ENCODE measurements at regions of chr11 and their contacts with region 1.

Region 1: DNA sequence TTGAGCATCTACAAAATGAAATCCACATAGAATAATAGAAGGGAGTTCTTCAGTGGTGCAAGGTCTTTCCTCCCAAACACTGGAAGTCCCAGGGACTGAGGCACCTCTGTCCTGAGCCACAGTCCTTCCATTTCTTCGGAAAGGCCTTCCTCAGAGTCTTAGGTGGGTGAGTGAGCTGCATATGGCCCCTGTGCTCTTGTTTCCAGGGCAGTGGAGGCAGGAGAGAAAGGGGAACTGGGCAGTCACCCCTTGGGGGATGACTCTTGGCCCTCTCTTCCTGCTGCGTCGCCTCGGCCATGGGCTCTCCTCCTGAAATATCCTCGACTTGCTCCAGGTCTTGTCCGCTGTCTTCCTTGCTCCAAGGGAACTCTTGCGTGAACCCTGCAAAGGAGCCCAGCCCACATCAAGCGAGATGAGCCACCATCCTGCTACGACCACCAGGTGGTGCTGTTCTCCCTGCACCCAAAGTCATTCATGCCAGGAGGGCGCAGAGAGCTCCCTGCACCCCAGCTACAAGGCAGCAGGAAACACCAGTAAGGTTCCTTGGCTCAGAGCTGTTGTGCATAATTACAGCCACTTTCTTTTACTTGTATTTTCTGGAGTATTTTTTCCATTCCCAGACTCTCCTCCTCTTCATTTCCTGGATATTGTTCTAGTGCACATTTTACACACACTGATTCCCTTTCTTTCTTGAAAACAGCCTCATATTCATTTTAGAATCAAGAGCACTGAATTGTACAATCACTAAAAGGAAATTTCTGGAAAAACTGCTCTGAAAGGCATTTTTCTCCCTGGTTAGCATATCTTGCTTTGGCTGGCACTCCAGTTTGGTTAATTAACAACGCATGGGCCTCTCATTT is 397.8 kb downstream of the OPCML start:
- DNase-seq: peak; percentile 84
- ATAC-seq: peak; percentile 97
- H3K4me3 Mint-ChIP-seq: no peak overlapping the region
- H3K27ac Mint-ChIP-seq: no peak overlapping the region
- H3K4me1 Mint-ChIP-seq: peaks cover 30% of the 10 kb centered on the region
- H3K27me3 Mint-ChIP-seq: no peaks in the 10 kb centered on the region
- CTCF ChIP-seq: peak; percentile 92

Region 2: GRCh38 chr11:133123366-133123765 is 11.2 kb before region 1 on chr11:
- CTCF ChIA-PET with region 1: interaction called, 24 read pairs
- POLR2A ChIA-PET with region 1: no interaction called
- DNase-seq: no peak
- ATAC-seq: no peak
- H3K4me3 Mint-ChIP-seq: no peak overlapping the region
- H3K27ac Mint-ChIP-seq: no peak overlapping the region
- H3K4me1 Mint-ChIP-seq: peaks cover 14% of the 10 kb centered on the region
- H3K27me3 Mint-ChIP-seq: no peaks in the 10 kb centered on the region; the same call in 1 of the 2 replicates
- CTCF ChIP-seq: no peak

Region 3: DNA sequence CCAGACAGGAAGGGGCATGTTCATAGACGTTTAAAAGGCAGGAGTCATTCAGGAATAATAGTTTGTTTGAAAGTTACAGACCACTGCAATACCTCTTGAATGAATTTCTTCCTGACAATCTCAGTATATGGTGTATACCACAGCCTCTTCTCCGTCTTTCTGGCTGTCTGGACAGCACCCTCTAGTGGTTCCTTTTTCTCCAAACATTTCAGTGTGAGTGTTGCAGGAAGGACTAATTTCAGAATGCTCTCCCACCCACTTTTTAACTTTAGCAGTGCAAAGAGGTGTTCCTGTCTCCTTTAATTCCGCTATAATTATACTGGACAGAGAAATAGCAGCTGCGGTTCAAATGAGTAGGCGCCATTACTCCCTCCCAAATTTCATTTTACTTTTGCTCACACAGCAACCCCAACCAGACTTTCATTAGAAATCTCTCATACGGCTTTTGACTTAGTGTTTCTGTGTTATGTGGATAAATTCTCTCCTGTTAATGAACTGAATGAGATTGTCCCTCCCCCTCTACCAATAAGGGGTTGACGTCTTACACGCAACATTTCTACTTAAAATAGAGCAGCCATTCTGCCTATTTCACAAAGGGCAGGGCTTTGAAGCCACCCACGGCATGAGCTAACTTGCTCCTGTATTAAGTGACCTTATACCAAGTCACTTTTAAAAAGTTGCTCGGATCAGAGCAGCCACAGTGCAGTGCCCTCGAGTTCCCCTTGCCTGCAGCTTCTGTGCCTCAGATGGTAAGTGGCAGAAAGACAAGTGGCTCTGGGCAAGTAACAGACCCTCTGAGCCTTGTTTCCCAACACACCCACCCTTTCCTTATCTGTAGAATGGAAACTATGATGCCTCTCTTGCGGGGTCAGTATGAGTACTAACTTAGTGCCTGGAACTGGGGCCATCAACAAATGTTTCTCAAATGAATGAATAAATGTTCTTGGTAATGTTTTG is 29.2 kb after region 1 on chr11:
- CTCF ChIA-PET with region 1: interaction called, 114 read pairs
- POLR2A ChIA-PET with region 1: interaction called, 3 read pairs
- DNase-seq: no peak
- ATAC-seq: peak; percentile 66
- H3K4me3 Mint-ChIP-seq: no peak overlapping the region
- H3K27ac Mint-ChIP-seq: no peak overlapping the region
- H3K4me1 Mint-ChIP-seq: peaks cover 33% of the 10 kb centered on the region
- H3K27me3 Mint-ChIP-seq: no peaks in the 10 kb centered on the region
- CTCF ChIP-seq: peak; percentile 63

Region 4: GRCh38 chr11:133239575-133239974 is 105.0 kb after region 1 on chr11:
- CTCF ChIA-PET with region 1: interaction called, 11 read pairs
- POLR2A ChIA-PET with region 1: no interaction called
- DNase-seq: no peak
- ATAC-seq: peak; percentile 59
- H3K4me3 Mint-ChIP-seq: no peak overlapping the region
- H3K27ac Mint-ChIP-seq: no peak overlapping the region
- H3K4me1 Mint-ChIP-seq: peaks cover 59% of the 10 kb centered on the region
- H3K27me3 Mint-ChIP-seq: no peaks in the 10 kb centered on the region; the same call in 1 of the 2 replicates
- CTCF ChIP-seq: no peak

Region 5: GRCh38 chr11:133834682-133835592 is 700.4 kb after region 1 on chr11:
- CTCF ChIA-PET with region 1: interaction called, 33 read pairs
- POLR2A ChIA-PET with region 1: no interaction called
- DNase-seq: peak; percentile 72
- ATAC-seq: peak; percentile 84
- H3K4me3 Mint-ChIP-seq: no peak overlapping the region
- H3K27ac Mint-ChIP-seq: 0 out of 2 replicates have a peak overlapping the region, but pooled peaks have one; percentile 0
- H3K4me1 Mint-ChIP-seq: peaks cover 19% of the 10 kb centered on the region
- H3K27me3 Mint-ChIP-seq: no peaks in the 10 kb centered on the region; the same call in 1 of the 2 replicates
- CTCF ChIP-seq: peak; percentile 60

Measured in WTC11 (cell line).